Endothelial cell of umbilical vein (primary cell): ENCODE measurements at regions of chr2 and their contacts with region 1.

Region 1: GRCh38 chr2:149648282-149649030 is 60.9 kb upstream of the MMADHC start:
- DNase-seq: peak; percentile 91
- H3K4me3 ChIP-seq: no peak overlapping the region
- H3K27ac ChIP-seq: peak overlapping the region; percentile 70
- H3K4me1 ChIP-seq: peaks cover 23% of the 10 kb centered on the region
- H3K27me3 ChIP-seq: no peaks in the 10 kb centered on the region
- CTCF ChIP-seq: no peak
- POLR2A ChIP-seq: no peak

Region 2: GRCh38 chr2:149573760-149574159 is 74.7 kb before region 1 on chr2:
- CTCF ChIA-PET with region 1: no interaction called
- POLR2A ChIA-PET with region 1: no interaction called
- dilution Hi-C with region 1: no loop called
- intact Hi-C with region 1: no loop called
- DNase-seq: peak; percentile 13
- H3K4me3 ChIP-seq: no peak overlapping the region
- H3K27ac ChIP-seq: no peak overlapping the region
- H3K4me1 ChIP-seq: no peaks in the 10 kb centered on the region
- H3K27me3 ChIP-seq: no peaks in the 10 kb centered on the region
- CTCF ChIP-seq: peak in 1 of 2 donors; percentile 4
- POLR2A ChIP-seq: no peak

Region 3: GRCh38 chr2:149629026-149629425 is 19.4 kb before region 1 on chr2:
- CTCF ChIA-PET with region 1: interaction called, 11 read pairs
- POLR2A ChIA-PET with region 1: no interaction called
- dilution Hi-C with region 1: no loop called
- intact Hi-C with region 1: no loop called
- DNase-seq: no peak
- H3K4me3 ChIP-seq: no peak overlapping the region
- H3K27ac ChIP-seq: no peak overlapping the region
- H3K4me1 ChIP-seq: no peaks in the 10 kb centered on the region
- H3K27me3 ChIP-seq: no peaks in the 10 kb centered on the region
- CTCF ChIP-seq: no peak
- POLR2A ChIP-seq: no peak

Region 4: DNA sequence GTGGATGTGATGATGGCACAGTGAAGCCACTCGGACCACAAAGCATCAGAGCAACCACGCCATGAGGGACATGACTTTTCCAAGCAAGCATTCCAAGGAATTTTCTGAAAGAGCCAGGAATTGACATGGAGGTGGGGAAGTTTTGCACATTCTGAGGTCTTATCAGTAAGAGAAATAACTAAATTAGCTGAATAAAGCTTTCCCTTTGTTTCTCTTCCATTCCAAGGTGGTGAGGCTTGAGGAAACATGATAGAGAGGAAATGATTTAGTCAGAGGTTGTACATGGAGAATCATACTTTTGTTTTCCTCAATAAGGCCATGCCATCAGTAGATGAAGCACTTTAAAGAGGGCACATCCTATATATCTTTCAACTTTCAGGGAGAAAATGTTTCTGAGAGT is 54.8 kb after region 1 on chr2:
- CTCF ChIA-PET with region 1: interaction called, 4 read pairs
- POLR2A ChIA-PET with region 1: no interaction called
- dilution Hi-C with region 1: no loop called
- intact Hi-C with region 1: loop called (anchors 1 kb)
- DNase-seq: peak; percentile 78
- H3K4me3 ChIP-seq: no peak overlapping the region
- H3K27ac ChIP-seq: peak overlapping the region; percentile 69
- H3K4me1 ChIP-seq: peaks cover 18% of the 10 kb centered on the region
- H3K27me3 ChIP-seq: no peaks in the 10 kb centered on the region
- CTCF ChIP-seq: no peak
- POLR2A ChIP-seq: no peak

Region 5: DNA sequence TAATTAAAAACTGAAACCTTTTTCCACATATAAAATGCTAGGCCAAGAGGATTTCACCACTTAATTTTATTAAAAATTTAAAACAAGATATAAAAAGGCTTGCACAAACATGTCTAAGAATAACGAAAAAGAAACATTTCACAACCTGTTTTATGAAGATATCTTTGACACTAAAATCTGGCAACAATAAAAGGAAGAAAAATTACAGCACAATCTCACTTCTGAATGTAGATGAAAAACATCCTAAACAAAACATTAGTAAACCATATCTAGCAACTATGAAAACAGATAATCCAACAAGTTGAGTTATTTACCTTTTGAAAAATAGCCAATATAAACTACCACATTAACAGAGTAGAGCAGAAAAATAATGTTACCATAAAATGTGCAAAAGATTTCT is 124.5 kb after region 1 on chr2:
- CTCF ChIA-PET with region 1: interaction called, 6 read pairs
- POLR2A ChIA-PET with region 1: no interaction called
- dilution Hi-C with region 1: no loop called
- intact Hi-C with region 1: loop called (anchors 5 kb)
- DNase-seq: peak; percentile 72
- H3K4me3 ChIP-seq: no peak overlapping the region
- H3K27ac ChIP-seq: peak overlapping the region; percentile 46
- H3K4me1 ChIP-seq: peaks cover 36% of the 10 kb centered on the region
- H3K27me3 ChIP-seq: no peaks in the 10 kb centered on the region
- CTCF ChIP-seq: no peak
- POLR2A ChIP-seq: no peak

Region 6: DNA sequence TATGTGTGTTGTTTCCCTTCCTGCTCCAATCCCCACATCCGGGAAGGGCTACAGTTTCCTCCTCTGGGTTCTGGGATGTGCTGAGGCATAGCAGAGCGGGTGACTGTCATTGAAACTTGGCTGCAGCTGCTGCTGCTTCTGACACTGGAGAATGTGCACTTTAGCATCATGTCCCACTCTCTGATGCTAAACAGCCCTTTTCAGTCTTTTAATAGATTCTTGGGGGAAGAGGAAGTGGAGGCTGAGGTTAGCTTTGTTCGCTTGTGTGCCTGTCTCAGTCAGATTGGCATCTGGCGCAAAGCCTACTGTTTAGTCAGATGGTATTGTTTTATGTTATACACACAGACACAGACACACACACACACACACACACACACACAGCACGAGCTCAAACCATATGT is 975.5 kb after region 1 on chr2:
- CTCF ChIA-PET with region 1: no interaction called
- POLR2A ChIA-PET with region 1: no interaction called
- dilution Hi-C with region 1: no loop called
- intact Hi-C with region 1: loop called (anchors 5 kb)
- DNase-seq: peak; percentile 89
- H3K4me3 ChIP-seq: no peak overlapping the region
- H3K27ac ChIP-seq: peak overlapping the region; percentile 68
- H3K4me1 ChIP-seq: peaks cover 49% of the 10 kb centered on the region
- H3K27me3 ChIP-seq: no peaks in the 10 kb centered on the region
- CTCF ChIP-seq: no peak
- POLR2A ChIP-seq: no peak